Activated CD4-positive, alpha-beta memory T cell treated with anti-CD3 and anti-CD28 coated beads for 36 hours (primary cell): ENCODE measurements at regions of chr6 and their contacts with region 1.

Region 1: DNA sequence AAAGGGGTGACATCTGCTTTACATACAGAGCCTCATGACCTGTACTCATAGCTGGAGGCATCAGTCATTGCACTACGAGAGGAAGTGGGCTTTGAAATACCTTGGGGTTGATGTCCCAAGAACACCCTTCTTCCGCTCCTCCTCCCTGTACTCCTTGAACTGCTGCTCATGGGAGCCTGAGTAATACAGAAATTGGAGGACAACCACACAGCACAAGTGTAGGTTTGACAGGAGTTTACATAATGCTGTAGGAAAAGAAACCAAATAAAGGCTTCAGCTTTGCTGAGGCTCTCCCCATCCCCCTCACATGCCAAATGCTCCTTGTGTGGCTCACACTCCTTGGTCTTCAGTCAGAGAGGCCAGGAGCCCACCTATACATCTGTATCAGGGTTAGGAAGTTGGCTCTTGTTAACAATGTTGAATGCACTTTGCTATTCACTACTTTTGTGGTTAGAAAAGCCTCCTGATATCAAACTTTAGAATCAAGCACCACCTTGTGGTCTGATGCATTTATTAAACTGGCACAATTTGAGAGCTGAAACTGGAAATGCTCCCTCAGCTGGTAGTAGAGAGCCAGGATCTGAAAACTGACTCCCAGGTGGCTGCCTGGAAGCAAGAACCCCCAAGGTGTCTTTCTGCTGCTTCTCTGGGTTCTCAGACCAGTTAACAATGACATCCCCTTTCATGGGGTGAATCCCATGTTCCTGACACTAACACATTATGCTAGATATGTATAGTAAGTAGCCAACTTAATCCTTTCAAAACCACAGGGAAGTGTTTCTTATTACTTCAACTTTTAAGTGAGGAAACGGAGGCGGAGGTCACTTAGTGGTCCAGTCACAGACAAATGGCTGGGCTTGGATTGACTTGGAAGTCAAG is 56.2 kb upstream of the EDN1 start:
- DNase-seq: peak; percentile 70
- H3K4me3 Mint-ChIP-seq: no peak overlapping the region
- H3K27ac Mint-ChIP-seq: no peak overlapping the region
- H3K4me1 Mint-ChIP-seq: peaks cover 35% of the 10 kb centered on the region
- H3K27me3 Mint-ChIP-seq: no peaks in the 10 kb centered on the region

Region 2: DNA sequence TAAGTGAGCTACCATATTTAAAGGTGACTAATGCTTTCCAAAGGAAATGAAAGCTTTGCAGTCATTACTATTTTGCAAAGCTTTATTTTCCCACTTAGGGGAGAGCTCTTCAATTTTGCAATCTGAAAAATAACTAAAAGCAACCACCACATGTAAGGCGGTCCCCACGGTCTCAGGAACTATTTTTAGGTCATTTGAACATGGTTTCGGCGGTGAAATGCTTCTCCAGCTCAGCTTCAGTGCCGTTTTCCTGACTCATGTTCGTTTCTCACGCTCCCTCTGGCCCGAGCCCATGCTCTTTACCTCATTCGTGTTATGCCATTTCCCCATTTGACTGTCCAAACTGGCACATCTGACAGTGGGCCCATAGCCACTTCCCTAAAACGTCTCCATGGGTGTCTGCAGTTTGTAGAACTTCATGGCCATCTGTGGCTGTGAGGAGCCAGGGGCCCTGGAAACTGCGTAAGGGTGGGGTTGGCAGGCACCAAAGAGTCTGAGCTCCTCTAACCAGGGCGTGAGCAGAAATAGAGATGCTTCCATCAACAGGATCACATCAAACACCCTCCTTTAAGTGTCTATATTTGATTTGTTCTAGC is 501.8 kb before region 1 on chr6:
- CTCF ChIA-PET with region 1: interaction called, 3 read pairs
- POLR2A ChIA-PET with region 1: no interaction called
- intact Hi-C with region 1: loop called (anchors 5 kb)
- DNase-seq: peak; percentile 85
- H3K4me3 Mint-ChIP-seq: peak overlapping the region; percentile 20
- H3K27ac Mint-ChIP-seq: peak overlapping the region; percentile 96
- H3K4me1 Mint-ChIP-seq: peaks cover 64% of the 10 kb centered on the region
- H3K27me3 Mint-ChIP-seq: no peaks in the 10 kb centered on the region

Region 3: GRCh38 chr6:12000174-12000573 is 233.8 kb before region 1 on chr6:
- CTCF ChIA-PET with region 1: no interaction called
- POLR2A ChIA-PET with region 1: no interaction called
- intact Hi-C with region 1: no loop called
- DNase-seq: no peak
- H3K4me3 Mint-ChIP-seq: no peak overlapping the region
- H3K27ac Mint-ChIP-seq: no peak overlapping the region
- H3K4me1 Mint-ChIP-seq: peaks cover 16% of the 10 kb centered on the region
- H3K27me3 Mint-ChIP-seq: no peaks in the 10 kb centered on the region

Region 4: DNA sequence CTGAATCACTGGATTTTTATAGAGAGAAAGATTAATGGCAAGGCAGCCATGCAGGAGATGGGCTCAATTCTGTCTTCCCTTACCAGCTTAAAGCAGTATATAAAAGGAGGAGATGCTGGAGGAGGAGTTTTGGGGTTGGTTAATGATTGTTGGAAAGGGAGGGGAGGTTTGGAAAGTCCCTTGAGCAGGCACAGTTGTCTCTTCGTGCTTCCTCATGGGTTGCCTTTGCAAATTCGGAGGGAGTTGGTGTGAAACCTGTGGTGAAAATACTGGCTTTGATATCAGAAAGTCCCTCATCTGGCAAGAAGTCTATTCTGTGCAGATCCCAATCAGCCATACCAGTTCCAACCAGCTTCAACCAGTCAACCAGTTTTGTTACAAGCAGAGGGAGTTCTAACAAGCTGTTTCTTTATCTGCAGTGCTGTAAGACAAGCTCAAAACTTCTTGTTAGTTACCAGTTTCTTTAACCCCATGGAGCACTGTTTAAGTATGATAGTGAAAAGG is 114.8 kb before region 1 on chr6:
- CTCF ChIA-PET with region 1: no interaction called
- POLR2A ChIA-PET with region 1: no interaction called
- intact Hi-C with region 1: loop called (anchors 5 kb)
- DNase-seq: peak; percentile 66
- H3K4me3 Mint-ChIP-seq: no peak overlapping the region
- H3K27ac Mint-ChIP-seq: peak overlapping the region; percentile 85
- H3K4me1 Mint-ChIP-seq: peaks cover 49% of the 10 kb centered on the region
- H3K27me3 Mint-ChIP-seq: no peaks in the 10 kb centered on the region

Region 5: DNA sequence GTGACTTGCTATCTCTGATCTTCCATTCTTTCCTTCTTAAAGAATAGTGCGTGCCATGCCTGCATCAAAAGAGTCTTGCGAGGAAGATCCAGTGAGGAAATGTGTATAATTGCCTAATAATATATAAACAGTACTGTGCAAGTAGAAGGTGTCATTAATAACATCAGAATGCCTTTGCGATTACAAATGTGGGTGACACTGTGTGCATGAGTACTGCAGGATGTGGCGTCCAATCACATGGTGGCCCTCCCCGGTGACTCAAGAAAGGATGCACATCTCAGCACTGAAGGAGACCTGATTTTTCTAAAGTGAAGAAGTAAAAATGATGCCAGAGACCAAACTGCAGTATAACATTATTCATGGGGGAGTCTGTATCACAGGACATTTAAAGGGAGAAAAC is 51.3 kb before region 1 on chr6:
- CTCF ChIA-PET with region 1: no interaction called
- POLR2A ChIA-PET with region 1: no interaction called
- intact Hi-C with region 1: no loop called
- DNase-seq: peak; percentile 23
- H3K4me3 Mint-ChIP-seq: no peak overlapping the region
- H3K27ac Mint-ChIP-seq: no peak overlapping the region
- H3K4me1 Mint-ChIP-seq: peaks cover 8% of the 10 kb centered on the region
- H3K27me3 Mint-ChIP-seq: peaks cover 2% of the 10 kb centered on the region

Region 6: GRCh38 chr6:12208190-12208589 is 25.7 kb before region 1 on chr6:
- CTCF ChIA-PET with region 1: interaction called, 3 read pairs
- POLR2A ChIA-PET with region 1: no interaction called
- intact Hi-C with region 1: loop called (anchors 2 kb)
- DNase-seq: peak; percentile 42
- H3K4me3 Mint-ChIP-seq: no peak overlapping the region
- H3K27ac Mint-ChIP-seq: no peak overlapping the region
- H3K4me1 Mint-ChIP-seq: peaks cover 8% of the 10 kb centered on the region
- H3K27me3 Mint-ChIP-seq: peaks cover 3% of the 10 kb centered on the region

Region 7: GRCh38 chr6:12666886-12667285 is 433.0 kb after region 1 on chr6:
- CTCF ChIA-PET with region 1: no interaction called
- POLR2A ChIA-PET with region 1: no interaction called
- intact Hi-C with region 1: no loop called
- DNase-seq: no peak
- H3K4me3 Mint-ChIP-seq: no peak overlapping the region
- H3K27ac Mint-ChIP-seq: no peak overlapping the region
- H3K4me1 Mint-ChIP-seq: no peaks in the 10 kb centered on the region
- H3K27me3 Mint-ChIP-seq: no peaks in the 10 kb centered on the region